ENCODE measurements at regions of chr1 and their contacts with region 1.

Region 1: DNA sequence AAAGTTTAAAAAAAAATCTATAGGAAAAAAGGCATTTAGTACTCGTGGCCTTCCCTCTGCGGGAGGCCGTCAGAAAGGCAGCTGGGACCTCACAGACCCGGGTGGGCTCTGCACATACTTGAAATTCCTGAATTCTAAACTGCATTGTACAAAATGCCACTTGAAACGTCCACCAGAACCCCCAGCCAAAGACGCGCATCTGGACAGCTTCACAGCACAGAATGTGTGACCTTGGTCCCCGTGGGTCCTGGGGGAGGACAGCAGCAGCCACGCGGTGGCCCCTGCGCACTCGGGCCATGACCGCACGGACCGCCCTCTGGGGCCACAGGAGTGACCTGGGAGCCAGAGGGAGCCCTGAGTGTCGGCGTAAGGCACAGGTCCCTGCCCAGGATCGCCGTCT is 20.6 kb upstream of the MRPS14 start:
- DNase-seq: no peak
- H3K4me3 ChIP-seq: no peak overlapping the region
- H3K27ac ChIP-seq: no peak overlapping the region
- H3K4me1 ChIP-seq: no peaks in the 10 kb centered on the region
- H3K27me3 ChIP-seq: no peaks in the 10 kb centered on the region
- CTCF ChIP-seq: no peak
- EP300 ChIP-seq: no peak
- POLR2A ChIP-seq: no peak

Region 2: GRCh38 chr1:175054736-175055135 is 10.9 kb after region 1 on chr1:
- in situ Hi-C with region 1: no loop called
- intact Hi-C with region 1: no loop called
- DNase-seq: no peak
- H3K4me3 ChIP-seq: no peak overlapping the region
- H3K27ac ChIP-seq: no peak overlapping the region
- H3K4me1 ChIP-seq: no peaks in the 10 kb centered on the region
- H3K27me3 ChIP-seq: no peaks in the 10 kb centered on the region
- CTCF ChIP-seq: no peak
- EP300 ChIP-seq: no peak
- POLR2A ChIP-seq: no peak

Region 3: DNA sequence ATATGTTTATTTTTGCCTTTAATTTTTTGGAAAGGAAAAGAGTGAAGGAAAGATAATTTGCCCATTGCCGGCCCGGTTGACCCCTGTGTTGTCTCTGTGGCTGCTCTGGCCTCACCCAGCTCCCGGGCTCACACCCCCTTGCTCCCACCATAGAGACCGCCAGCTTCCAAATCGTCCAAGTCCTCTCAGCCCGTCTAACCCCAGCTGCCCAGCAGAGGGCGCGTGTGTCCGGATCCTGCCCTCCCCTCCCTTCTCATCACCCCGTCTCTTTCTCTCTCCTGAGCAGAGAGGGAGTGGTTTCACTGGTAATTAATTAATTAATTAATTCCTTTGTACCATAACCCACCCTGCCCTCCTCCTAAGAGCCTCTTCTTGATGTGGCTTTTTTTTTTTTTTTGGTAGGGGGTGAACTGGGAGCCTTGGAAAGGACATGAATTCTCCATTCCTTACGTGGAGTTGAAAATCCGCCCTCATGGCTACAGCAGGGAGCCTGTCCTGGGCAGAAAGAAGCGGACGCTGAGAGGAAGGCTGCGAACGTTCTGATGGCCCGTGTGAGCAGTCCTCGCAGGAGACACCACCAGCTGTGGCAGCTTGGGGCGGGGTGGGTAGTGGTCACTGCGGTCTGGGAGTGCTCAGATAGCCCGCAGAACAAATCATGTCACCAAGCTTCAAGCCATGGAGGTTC is 102.8 kb after region 1 on chr1:
- in situ Hi-C with region 1: loop called in 1 of 4 experiments (anchors 25 kb)
- intact Hi-C with region 1: no loop called
- DNase-seq: peak; percentile 68
- H3K4me3 ChIP-seq: no peak overlapping the region
- H3K27ac ChIP-seq: no peak overlapping the region
- H3K4me1 ChIP-seq: peaks cover 0 to 7% (median 0%) of the 10 kb centered on the region in 4 donors
- H3K27me3 ChIP-seq: peaks cover 4% of the 10 kb centered on the region
- CTCF ChIP-seq: peak; percentile 64 to 85 (median 80)
- EP300 ChIP-seq: no peak
- POLR2A ChIP-seq: no peak

Region 4: DNA sequence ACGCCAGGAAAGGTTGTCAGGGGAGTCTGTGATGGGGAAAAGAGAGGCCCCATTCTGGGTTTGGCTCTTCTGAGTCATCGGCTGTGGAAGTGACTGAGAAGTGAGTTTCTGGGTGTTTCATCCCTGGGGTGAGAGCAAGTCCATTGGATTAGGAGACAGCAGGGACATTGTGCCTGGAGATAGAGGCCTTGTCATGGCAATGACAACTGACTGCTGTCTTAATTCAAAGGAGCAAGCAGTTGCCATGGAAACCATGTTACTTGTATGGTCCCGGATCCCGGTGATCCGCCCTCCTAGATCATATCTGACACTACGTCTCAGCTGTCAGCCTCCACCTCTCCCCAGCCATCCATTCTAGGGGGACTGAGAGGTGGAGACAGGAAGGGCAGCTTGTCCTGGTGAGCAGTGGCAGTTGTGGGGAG is 114.4 kb after region 1 on chr1:
- in situ Hi-C with region 1: no loop called
- intact Hi-C with region 1: no loop called
- DNase-seq: no peak
- H3K4me3 ChIP-seq: no peak overlapping the region
- H3K27ac ChIP-seq: no peak overlapping the region
- H3K4me1 ChIP-seq: no peaks in the 10 kb centered on the region
- H3K27me3 ChIP-seq: peaks cover 11% of the 10 kb centered on the region
- CTCF ChIP-seq: no peak
- EP300 ChIP-seq: no peak
- POLR2A ChIP-seq: no peak

Region 5: GRCh38 chr1:175319418-175320230 is 275.8 kb after region 1 on chr1:
- in situ Hi-C with region 1: loop called in 3 of 4 experiments (anchors 10 to 25 kb)
- intact Hi-C with region 1: loop called (anchors 10 kb)
- DNase-seq: peak; percentile 78
- H3K4me3 ChIP-seq: no peak overlapping the region
- H3K27ac ChIP-seq: peak overlapping the region in 1 of 4 donors; percentile 10
- H3K4me1 ChIP-seq: peaks cover 0 to 11% (median 2%) of the 10 kb centered on the region in 4 donors
- H3K27me3 ChIP-seq: no peaks in the 10 kb centered on the region
- CTCF ChIP-seq: peak; percentile 85 to 90 (median 86)
- EP300 ChIP-seq: no peak
- POLR2A ChIP-seq: no peak

Region 6: DNA sequence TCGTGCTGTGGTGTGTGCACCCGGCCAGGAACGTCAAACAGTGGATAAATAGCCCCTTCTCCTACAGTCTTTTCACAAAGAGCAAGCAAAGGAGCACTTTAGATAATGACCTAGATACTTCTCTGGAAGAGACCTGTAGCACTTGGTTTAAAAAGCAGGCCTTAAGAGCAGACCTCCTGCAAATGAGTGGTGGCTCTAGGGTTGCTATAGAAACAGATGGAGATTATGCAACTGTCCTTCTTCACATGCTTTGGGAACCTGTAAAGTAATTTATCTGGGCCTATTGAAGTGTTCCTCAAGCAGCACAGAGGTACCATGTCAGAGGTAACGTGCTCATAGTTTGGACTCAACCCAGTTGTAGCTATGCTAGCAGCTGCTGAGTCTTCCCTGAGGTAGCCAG is 356.9 kb after region 1 on chr1:
- in situ Hi-C with region 1: no loop called
- intact Hi-C with region 1: no loop called
- DNase-seq: no peak
- H3K4me3 ChIP-seq: no peak overlapping the region
- H3K27ac ChIP-seq: no peak overlapping the region
- H3K4me1 ChIP-seq: no peaks in the 10 kb centered on the region
- H3K27me3 ChIP-seq: no peaks in the 10 kb centered on the region
- CTCF ChIP-seq: no peak
- EP300 ChIP-seq: no peak
- POLR2A ChIP-seq: no peak

Measured in transverse colon (tissue), 4 donors.